Heart right ventricle (tissue), 16 donors: ENCODE measurements at regions of chr9 and their contacts with region 1.

Region 1: GRCh38 chr9:101907466-101907865 is 169.0 kb upstream of the GRIN3A start:
- DNase-seq: no peak
- ATAC-seq: no peak
- H3K4me3 ChIP-seq: no peak overlapping the region
- H3K27ac ChIP-seq: no peak overlapping the region
- H3K4me1 ChIP-seq: no peaks in the 10 kb centered on the region
- H3K27me3 ChIP-seq: no peaks in the 10 kb centered on the region
- CTCF ChIP-seq: no peak

Region 2: DNA sequence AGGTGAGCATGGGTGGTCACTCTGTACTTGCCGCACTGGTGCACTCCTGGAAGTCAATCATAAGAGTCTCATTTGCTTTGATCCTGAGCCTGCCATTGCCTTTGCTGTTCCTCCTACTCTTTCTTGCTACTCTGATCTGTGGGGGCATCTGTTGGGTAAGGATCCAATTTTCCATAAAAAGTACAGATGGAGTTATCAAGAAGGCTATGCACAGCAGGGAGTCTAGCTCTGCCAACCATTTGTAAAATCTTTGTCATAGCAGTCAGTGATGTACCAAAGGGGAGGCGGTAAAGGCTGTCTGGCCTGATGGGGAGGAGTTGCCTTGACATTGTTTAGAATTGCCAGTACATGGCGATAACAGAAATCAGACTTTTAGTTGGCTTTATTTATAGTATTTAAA is 988.0 kb before region 1 on chr9:
- intact Hi-C with region 1: no loop called
- DNase-seq: no peak
- ATAC-seq: no peak
- H3K4me3 ChIP-seq: no peak overlapping the region
- H3K27ac ChIP-seq: no peak overlapping the region
- H3K4me1 ChIP-seq: no peaks in the 10 kb centered on the region
- H3K27me3 ChIP-seq: no peaks in the 10 kb centered on the region
- CTCF ChIP-seq: no peak

Region 3: DNA sequence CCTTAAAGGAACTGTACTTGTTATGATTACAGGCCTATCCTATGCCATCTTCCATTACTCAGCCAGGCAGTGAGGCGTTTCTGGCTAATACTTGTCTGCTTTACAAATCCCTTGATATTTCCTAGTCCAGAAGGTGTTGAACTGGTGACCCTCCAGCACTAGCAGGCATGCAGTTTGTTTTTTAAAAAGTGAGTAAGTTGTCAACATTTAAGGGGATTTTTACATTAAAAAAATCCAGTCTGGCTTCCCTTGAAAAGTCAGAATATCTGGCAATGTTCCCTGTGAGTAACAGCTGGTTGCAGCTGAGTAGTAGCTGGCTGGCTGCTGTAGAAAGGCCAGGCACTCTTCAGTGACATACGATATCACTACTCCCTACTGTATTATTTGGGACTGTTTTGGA is 190.8 kb before region 1 on chr9:
- intact Hi-C with region 1: no loop called
- DNase-seq: peak in 1 of 2 donors; percentile 36
- ATAC-seq: peak in 7 of 8 donors; percentile 55 to 81 (median 61)
- H3K4me3 ChIP-seq: no peak overlapping the region
- H3K27ac ChIP-seq: no peak overlapping the region
- H3K4me1 ChIP-seq: peaks cover 0 to 8% (median 0%) of the 10 kb centered on the region in 9 donors
- H3K27me3 ChIP-seq: peaks cover 0 to 9% (median 0%) of the 10 kb centered on the region in 7 donors
- CTCF ChIP-seq: no peak

Region 4: DNA sequence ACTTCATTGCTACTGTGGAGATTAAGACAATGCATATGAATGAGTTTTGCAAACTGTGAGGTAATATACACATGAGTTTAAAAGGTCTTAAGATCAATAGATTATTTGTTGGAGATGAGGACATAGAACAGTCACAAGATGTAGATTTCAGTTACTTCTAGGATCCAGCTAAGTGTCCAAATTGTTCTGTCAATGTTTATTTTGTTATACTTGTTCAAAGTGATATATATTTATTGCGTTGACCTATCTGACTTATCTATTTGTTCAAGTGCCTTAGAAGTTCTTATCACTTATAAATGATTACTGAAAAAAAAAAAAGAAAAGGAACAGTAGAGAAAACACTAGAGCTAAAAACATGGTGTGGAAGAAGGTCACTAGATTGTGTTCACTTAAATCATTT is 93.4 kb before region 1 on chr9:
- intact Hi-C with region 1: no loop called
- DNase-seq: no peak
- ATAC-seq: no peak
- H3K4me3 ChIP-seq: no peak overlapping the region
- H3K27ac ChIP-seq: no peak overlapping the region
- H3K4me1 ChIP-seq: no peaks in the 10 kb centered on the region
- H3K27me3 ChIP-seq: no peaks in the 10 kb centered on the region
- CTCF ChIP-seq: no peak

Region 5: GRCh38 chr9:101832486-101832885 is 75.0 kb before region 1 on chr9:
- intact Hi-C with region 1: no loop called
- DNase-seq: no peak
- ATAC-seq: no peak
- H3K4me3 ChIP-seq: no peak overlapping the region
- H3K27ac ChIP-seq: no peak overlapping the region
- H3K4me1 ChIP-seq: no peaks in the 10 kb centered on the region
- H3K27me3 ChIP-seq: no peaks in the 10 kb centered on the region
- CTCF ChIP-seq: no peak

Region 6: GRCh38 chr9:101848485-101848919 is 59.0 kb before region 1 on chr9:
- intact Hi-C with region 1: loop called in 2 of 10 experiments (anchors 10 kb)
- DNase-seq: no peak
- ATAC-seq: peak in 1 of 8 donors; percentile 31
- H3K4me3 ChIP-seq: no peak overlapping the region
- H3K27ac ChIP-seq: no peak overlapping the region
- H3K4me1 ChIP-seq: no peaks in the 10 kb centered on the region
- H3K27me3 ChIP-seq: no peaks in the 10 kb centered on the region
- CTCF ChIP-seq: no peak

Region 7: DNA sequence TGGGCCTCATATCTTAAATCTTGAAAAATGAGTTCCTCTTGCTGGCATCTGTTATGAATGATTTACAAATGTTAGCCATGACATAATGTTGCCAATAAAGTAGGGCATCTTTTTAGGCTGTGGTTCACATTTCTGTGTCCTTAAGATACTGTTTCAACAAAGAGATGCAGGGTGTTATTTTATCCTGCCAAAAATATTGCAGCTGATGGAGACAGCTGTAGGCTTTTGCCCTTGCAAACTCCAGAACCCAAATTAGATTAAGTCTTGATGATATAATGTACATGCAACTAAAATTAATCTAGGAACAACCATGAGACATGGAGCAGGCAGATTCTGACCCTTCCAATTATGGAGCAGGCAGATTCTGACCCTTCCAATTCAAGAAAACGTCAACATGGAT is 59.2 kb after region 1 on chr9:
- intact Hi-C with region 1: loop called in 1 of 10 experiments (anchors 10 kb)
- DNase-seq: no peak
- ATAC-seq: no peak
- H3K4me3 ChIP-seq: no peak overlapping the region
- H3K27ac ChIP-seq: no peak overlapping the region
- H3K4me1 ChIP-seq: no peaks in the 10 kb centered on the region
- H3K27me3 ChIP-seq: no peaks in the 10 kb centered on the region
- CTCF ChIP-seq: no peak